Activated T-helper 1 cell treated with anti-CD3 and anti-CD28 coated beads, Interleukin-12 subunit alpha, Interleukin-12 subunit beta, Interleukin-2, Interleukin-4 antibody, amounts not matched to agents 30 ng/mL and 10 ng/mL and 1 ng/mL, durations not matched to agents 14 hours and 24 hours and 36 hours (primary cell): ENCODE measurements at regions of chr15 and their contacts with region 1.

Region 1: DNA sequence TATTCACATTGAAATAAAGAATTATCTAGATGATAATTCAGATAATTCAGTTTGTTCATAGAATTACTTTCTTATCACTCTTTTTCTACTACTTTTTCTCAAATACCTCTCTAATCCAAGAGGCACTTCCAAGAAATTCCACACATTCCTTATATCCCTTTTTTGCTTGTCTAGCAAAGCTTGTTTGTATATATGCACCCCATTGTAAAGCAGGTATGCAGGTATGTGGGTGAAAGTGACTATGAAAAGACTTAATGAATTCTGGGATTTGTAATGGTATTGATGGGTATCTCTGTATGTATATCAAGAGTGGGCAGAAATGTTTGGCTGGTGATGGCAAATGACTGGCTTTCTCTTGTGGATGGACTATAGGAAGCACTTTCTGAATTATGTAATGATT is 94.1 kb upstream of the FGF7 start:
- DNase-seq: no peak
- H3K4me3 Mint-ChIP-seq: no peak overlapping the region
- H3K27ac Mint-ChIP-seq: no peak overlapping the region
- H3K4me1 Mint-ChIP-seq: peaks cover 4% of the 10 kb centered on the region
- H3K27me3 Mint-ChIP-seq: no peaks in the 10 kb centered on the region

Region 2: DNA sequence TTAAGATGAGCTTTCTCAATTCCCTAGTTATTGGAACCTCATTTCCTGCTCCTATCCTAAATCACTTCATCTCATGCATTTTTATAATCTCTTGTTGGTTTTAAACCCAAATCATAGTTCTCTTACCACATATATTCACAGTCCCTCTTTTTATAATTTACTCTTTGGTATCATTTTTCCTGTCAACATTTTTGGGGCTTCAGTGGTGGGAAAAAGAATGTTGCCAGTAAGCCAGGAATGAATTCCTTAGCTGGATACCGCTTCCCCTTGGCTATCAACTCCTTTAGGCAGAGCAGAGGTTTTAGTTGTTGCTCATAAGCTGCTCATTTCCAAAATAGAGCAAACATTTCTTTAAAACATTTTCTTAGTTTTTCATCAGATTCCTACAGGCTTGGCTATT is 46.6 kb before region 1 on chr15:
- intact Hi-C with region 1: loop called (anchors 5 kb)
- DNase-seq: no peak
- H3K4me3 Mint-ChIP-seq: no peak overlapping the region
- H3K27ac Mint-ChIP-seq: no peak overlapping the region
- H3K4me1 Mint-ChIP-seq: peaks cover 24% of the 10 kb centered on the region
- H3K27me3 Mint-ChIP-seq: no peaks in the 10 kb centered on the region